ENCODE measurements at regions of chr5 and their contacts with region 1.

Region 1: DNA sequence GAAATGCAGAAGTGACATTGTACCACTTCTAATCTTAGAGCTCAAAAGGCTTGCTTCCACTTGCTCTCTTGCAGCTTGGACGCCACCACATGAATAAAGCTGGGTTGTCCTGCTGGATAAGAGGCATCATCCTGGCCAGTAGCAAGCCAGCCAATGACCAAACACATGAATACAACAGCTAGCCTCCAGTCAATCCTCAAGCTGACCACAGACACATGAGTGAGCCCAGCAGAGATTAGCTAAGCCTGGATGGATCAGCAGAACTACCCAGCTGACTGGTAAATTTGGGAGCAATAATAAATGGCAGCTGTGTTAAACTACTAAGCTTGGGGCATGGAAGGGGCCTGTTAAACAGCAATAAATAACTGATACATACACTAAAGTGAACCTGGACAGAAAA is 121.1 kb upstream of the SLC12A2 start:
- DNase-seq: no peak
- ATAC-seq: no peak
- H3K4me3 ChIP-seq: no peak overlapping the region
- H3K27ac ChIP-seq: no peak overlapping the region
- H3K4me1 ChIP-seq: peaks cover 13 to 19% of the 10 kb centered on the region in 2 experiments
- H3K27me3 ChIP-seq: no peaks in the 10 kb centered on the region
- CTCF ChIP-seq: no peak
- POLR2A ChIP-seq: no peak
- RAD21 ChIP-seq: no peak

Region 2: GRCh38 chr5:127976991-127977717 is 14.7 kb after region 1 on chr5:
- CTCF ChIA-PET with region 1: no interaction called
- POLR2A ChIA-PET with region 1: no interaction called
- RAD21 ChIA-PET with region 1: interaction called in 1 of 2 experiments, 12 read pairs
- intact Hi-C with region 1: no loop called
- DNase-seq: no peak
- ATAC-seq: no peak
- H3K4me3 ChIP-seq: no peak overlapping the region
- H3K27ac ChIP-seq: no peak overlapping the region
- H3K4me1 ChIP-seq: no peaks in the 10 kb centered on the region
- H3K27me3 ChIP-seq: no peaks in the 10 kb centered on the region
- CTCF ChIP-seq: no peak
- POLR2A ChIP-seq: no peak
- RAD21 ChIP-seq: no peak

Measured in HCT116 (cell line).